CD8-positive, alpha-beta memory T cell (primary cell): ENCODE measurements at regions of chr16 and their contacts with region 1.

Region 1: GRCh38 chr16:49407873-49408550 is 34.4 kb downstream of the C16orf78 start:
- DNase-seq: peak; percentile 32 to 64 (median 36)
- H3K4me3 ChIP-seq: no peak overlapping the region
- H3K4me3 Mint-ChIP-seq: no peak overlapping the region
- H3K27ac ChIP-seq: no peak overlapping the region
- H3K27ac Mint-ChIP-seq: peak overlapping the region in 1 of 8 donors; percentile 2
- H3K4me1 ChIP-seq: no peaks in the 10 kb centered on the region
- H3K4me1 Mint-ChIP-seq: peaks cover 0 to 3% (median 3%) of the 10 kb centered on the region in 3 donors
- H3K27me3 ChIP-seq: no peaks in the 10 kb centered on the region
- H3K27me3 Mint-ChIP-seq: peaks cover 5 to 15% of the 10 kb centered on the region in 2 donors

Region 2: GRCh38 chr16:49592546-49593423 is 184.8 kb after region 1 on chr16:
- CTCF ChIA-PET with region 1: interaction called, 14 read pairs
- POLR2A ChIA-PET with region 1: no interaction called
- DNase-seq: peak in 3 of 5 donors; percentile 4 to 45 (median 28)
- H3K4me3 ChIP-seq: no peak overlapping the region
- H3K4me3 Mint-ChIP-seq: no peak overlapping the region
- H3K27ac ChIP-seq: no peak overlapping the region
- H3K27ac Mint-ChIP-seq: peak overlapping the region in 1 of 8 donors; percentile 15
- H3K4me1 ChIP-seq: peaks cover 8% of the 10 kb centered on the region
- H3K4me1 Mint-ChIP-seq: peaks cover 0 to 7% (median 0%) of the 10 kb centered on the region in 3 donors
- H3K27me3 ChIP-seq: no peaks in the 10 kb centered on the region
- H3K27me3 Mint-ChIP-seq: peaks cover 4 to 31% of the 10 kb centered on the region in 2 donors